HCT116 (cell line): ENCODE measurements at regions of chr10 and their contacts with region 1.

Region 1: DNA sequence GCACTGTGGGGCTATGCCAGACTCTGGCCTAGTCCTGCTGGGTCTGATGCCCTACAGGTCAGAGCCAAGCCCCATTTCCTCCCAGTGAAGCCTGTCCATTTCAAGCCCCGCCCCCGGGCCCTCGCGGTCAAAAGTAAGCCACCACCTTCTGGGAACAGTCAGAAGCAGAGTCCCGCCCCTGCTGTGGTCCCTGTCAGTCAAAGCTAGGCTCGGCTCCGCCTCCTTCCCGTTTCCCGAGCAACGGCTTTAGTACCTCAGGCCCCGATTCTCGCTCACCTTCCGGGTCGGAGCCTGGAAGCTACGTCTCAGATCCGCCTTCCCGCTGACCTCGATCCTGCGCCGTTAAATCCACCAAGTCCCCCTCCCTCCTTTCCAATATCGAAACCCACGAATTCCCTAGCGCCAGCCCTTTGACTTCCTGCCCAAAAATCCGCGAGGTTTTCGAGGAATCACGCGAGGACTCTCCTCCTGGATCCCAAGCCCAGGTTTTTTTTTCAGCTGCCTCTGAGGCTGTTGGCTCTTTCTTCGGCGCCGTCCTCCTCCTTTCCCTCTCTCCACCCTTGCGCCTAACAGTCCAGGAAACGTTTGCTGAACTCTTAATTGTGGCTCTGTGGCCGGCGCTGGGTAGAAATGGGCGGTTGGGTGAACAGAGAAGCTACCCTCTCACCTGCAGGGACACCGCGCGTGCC is 11.8 kb downstream of the SFXN3 start:
- DNase-seq: peak; percentile 97
- ATAC-seq: peak; percentile 91
- H3K4me3 ChIP-seq: peak overlapping the region; percentile 55 to 59
- H3K27ac ChIP-seq: peak overlapping the region; percentile 84
- H3K4me1 ChIP-seq: peaks cover 26 to 33% of the 10 kb centered on the region in 2 experiments
- H3K27me3 ChIP-seq: no peaks in the 10 kb centered on the region
- CTCF ChIP-seq: no peak
- POLR2A ChIP-seq: peak; percentile 82
- RAD21 ChIP-seq: no peak

Region 2: GRCh38 chr10:100791369-100792058 is 251.3 kb before region 1 on chr10:
- CTCF ChIA-PET with region 1: no interaction called
- POLR2A ChIA-PET with region 1: no interaction called
- RAD21 ChIA-PET with region 1: no interaction called
- intact Hi-C with region 1: no loop called
- DNase-seq: no peak
- ATAC-seq: no peak
- H3K4me3 ChIP-seq: no peak overlapping the region
- H3K27ac ChIP-seq: no peak overlapping the region
- H3K4me1 ChIP-seq: no peaks in the 10 kb centered on the region
- H3K27me3 ChIP-seq: no peaks in the 10 kb centered on the region
- CTCF ChIP-seq: no peak
- POLR2A ChIP-seq: no peak
- RAD21 ChIP-seq: no peak

Region 3: DNA sequence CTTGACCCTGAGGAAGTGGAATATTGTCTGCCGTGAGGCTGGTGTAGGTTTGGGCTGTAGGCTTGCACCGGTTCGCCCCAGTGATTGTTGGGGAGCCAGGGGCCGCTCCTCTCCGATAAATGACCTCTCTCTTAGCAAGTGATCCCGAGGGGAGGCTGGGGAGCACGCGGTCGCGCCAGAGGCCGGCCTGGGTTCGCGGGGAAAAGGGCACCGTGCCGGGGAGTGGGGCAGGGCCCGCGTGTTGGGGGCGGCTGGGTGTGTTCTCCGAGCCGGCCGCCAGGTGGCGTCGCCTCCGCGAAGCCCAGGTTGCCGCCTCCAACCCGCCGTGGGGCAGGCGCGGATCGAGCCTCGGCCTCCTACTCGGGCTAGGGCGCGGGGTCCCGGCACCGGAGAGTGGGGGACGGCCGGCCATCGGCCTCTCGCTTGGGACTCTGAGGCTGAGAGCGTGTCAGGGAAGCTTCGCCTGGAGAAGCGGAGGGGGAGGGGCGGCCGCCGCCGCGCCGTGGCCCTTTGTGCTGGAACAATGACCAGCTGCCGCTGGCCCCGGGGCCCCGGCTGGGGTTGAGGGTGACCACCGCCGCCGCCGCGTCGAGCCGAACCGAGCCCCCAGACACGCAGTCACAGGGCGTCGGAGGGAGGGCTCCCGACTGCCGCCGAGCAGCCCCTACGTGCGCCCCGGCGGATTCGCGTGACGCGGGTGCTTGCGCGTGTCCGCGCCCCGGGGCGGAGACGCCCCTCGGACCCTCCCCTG is 43.6 kb before region 1 on chr10:
- CTCF ChIA-PET with region 1: interaction called, 12 read pairs
- POLR2A ChIA-PET with region 1: no interaction called
- RAD21 ChIA-PET with region 1: no interaction called
- intact Hi-C with region 1: no loop called
- DNase-seq: no peak
- ATAC-seq: peak; percentile 51
- H3K4me3 ChIP-seq: peak overlapping the region; percentile 88 to 92
- H3K27ac ChIP-seq: peak overlapping the region; percentile 87
- H3K4me1 ChIP-seq: peaks cover 21 to 55% of the 10 kb centered on the region in 2 experiments
- H3K27me3 ChIP-seq: no peaks in the 10 kb centered on the region
- CTCF ChIP-seq: peak in 2 of 3 experiments; percentile 93 to 96; a peak in 4 of 6 replicates
- POLR2A ChIP-seq: no peak
- RAD21 ChIP-seq: no peak

Region 4: GRCh38 chr10:101031128-101031795 is 11.5 kb before region 1 on chr10 and contains the starts of genes PDZD7 and SFXN3:
- CTCF ChIA-PET with region 1: interaction called, 71 read pairs
- POLR2A ChIA-PET with region 1: interaction called, 12 read pairs
- RAD21 ChIA-PET with region 1: no interaction called
- intact Hi-C with region 1: no loop called
- DNase-seq: peak; percentile 94
- ATAC-seq: peak; percentile 87
- H3K4me3 ChIP-seq: peak within 1 kb of the TSS; percentile 67 to 87
- H3K27ac ChIP-seq: peak within 1 kb of the TSS; percentile 81
- H3K4me1 ChIP-seq: peaks cover 32 to 56% of the 10 kb centered on the region in 2 experiments
- H3K27me3 ChIP-seq: no peaks in the 10 kb centered on the region
- CTCF ChIP-seq: no peak
- POLR2A ChIP-seq: no peak
- RAD21 ChIP-seq: no peak
- total RNA-seq, gene PDZD7: 6.1 TPM
- total RNA-seq, gene SFXN3: 52.5 TPM

Region 5: GRCh38 chr10:101060036-101060950 is 17.5 kb after region 1 on chr10:
- CTCF ChIA-PET with region 1: interaction called, 76 read pairs
- POLR2A ChIA-PET with region 1: interaction called, 17 read pairs
- RAD21 ChIA-PET with region 1: interaction called, 5 to 6 read pairs
- intact Hi-C with region 1: loop called (anchors 2 kb)
- DNase-seq: peak; percentile 98
- ATAC-seq: peak; percentile 67
- H3K4me3 ChIP-seq: peak overlapping the region; percentile 80 to 84
- H3K27ac ChIP-seq: peak overlapping the region; percentile 99
- H3K4me1 ChIP-seq: peaks cover 42 to 51% of the 10 kb centered on the region in 2 experiments
- H3K27me3 ChIP-seq: no peaks in the 10 kb centered on the region
- CTCF ChIP-seq: peak in 2 of 3 experiments; percentile 98 to 99; a peak in 4 of 6 replicates
- POLR2A ChIP-seq: peak; percentile 37
- RAD21 ChIP-seq: no peak

Region 6: DNA sequence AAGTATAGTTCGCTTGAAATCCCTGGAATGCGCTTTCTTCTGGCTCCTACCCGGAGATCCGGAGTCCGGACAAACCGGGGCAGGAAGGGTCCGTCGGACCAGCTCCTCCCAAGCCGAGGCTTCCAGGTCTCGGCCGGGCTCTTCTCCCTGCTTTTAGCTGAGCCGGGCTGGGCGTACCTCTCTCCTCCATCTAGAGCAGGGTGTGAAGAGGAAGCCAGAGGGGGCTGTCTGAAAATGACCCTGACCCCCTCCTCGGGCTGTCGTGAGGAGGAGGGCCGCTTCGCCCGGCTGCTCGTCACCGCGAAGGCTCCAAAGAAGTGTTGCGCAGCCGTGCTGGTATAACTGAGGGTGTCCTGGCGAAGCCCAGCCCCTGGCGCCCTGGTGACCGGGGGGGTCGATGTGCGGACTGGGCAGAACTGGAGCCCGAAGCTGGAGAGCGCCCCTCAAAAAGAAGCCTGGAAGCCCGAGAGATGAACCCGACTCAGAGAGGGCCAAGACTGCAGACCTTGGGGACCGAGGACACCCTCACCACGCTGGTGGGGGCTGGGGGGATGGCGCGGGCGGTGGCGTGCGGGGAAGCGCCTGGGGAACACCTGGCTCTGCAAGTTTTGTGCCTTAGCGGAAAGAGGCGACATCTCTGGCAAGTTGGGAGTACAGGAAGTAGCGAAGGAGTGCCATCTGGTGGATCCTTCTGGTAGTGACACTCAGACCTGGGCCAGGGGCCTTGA is 24.7 kb after region 1 on chr10:
- CTCF ChIA-PET with region 1: interaction called, 76 read pairs
- POLR2A ChIA-PET with region 1: interaction called, 6 read pairs
- RAD21 ChIA-PET with region 1: interaction called, 7 to 8 read pairs
- intact Hi-C with region 1: loop called (anchors 1 kb)
- DNase-seq: peak; percentile 91
- ATAC-seq: peak; percentile 39
- H3K4me3 ChIP-seq: peak overlapping the region; percentile 66 to 71
- H3K27ac ChIP-seq: peak overlapping the region; percentile 93
- H3K4me1 ChIP-seq: peaks cover 37 to 79% of the 10 kb centered on the region in 2 experiments
- H3K27me3 ChIP-seq: no peaks in the 10 kb centered on the region
- CTCF ChIP-seq: peak in 2 of 3 experiments; percentile 89 to 94; a peak in 4 of 6 replicates
- POLR2A ChIP-seq: no peak
- RAD21 ChIP-seq: no peak

Region 7: GRCh38 chr10:101330631-101331225 is 287.9 kb after region 1 on chr10:
- CTCF ChIA-PET with region 1: no interaction called
- POLR2A ChIA-PET with region 1: no interaction called
- RAD21 ChIA-PET with region 1: no interaction called
- intact Hi-C with region 1: no loop called
- DNase-seq: no peak
- ATAC-seq: no peak
- H3K4me3 ChIP-seq: no peak overlapping the region
- H3K27ac ChIP-seq: no peak overlapping the region
- H3K4me1 ChIP-seq: no peaks in the 10 kb centered on the region
- H3K27me3 ChIP-seq: no peaks in the 10 kb centered on the region; the same call in 1 of the 2 replicates
- CTCF ChIP-seq: no peak
- POLR2A ChIP-seq: no peak
- RAD21 ChIP-seq: no peak